ENCODE measurements at regions of chr2 and their contacts with region 1.

Region 1: GRCh38 chr2:10302479-10303180 is at the start of gene HPCAL1:
- DNase-seq: no peak
- ATAC-seq: peak; percentile 87
- H3K4me3 ChIP-seq: peak within 1 kb of the TSS; percentile 88 to 94
- H3K27ac ChIP-seq: peak within 1 kb of the TSS; percentile 91
- H3K4me1 ChIP-seq: peaks cover 52% of the 10 kb centered on the region
- H3K27me3 ChIP-seq: no peaks in the 10 kb centered on the region
- CTCF ChIP-seq: peak; percentile 82
- total RNA-seq, gene HPCAL1: 234 TPM

Region 2: GRCh38 chr2:10316336-10316735 is 13.7 kb after region 1 on chr2:
- CTCF ChIA-PET with region 1: interaction called, 10 read pairs
- POLR2A ChIA-PET with region 1: no interaction called
- in situ Hi-C with region 1: no loop called
- intact Hi-C with region 1: no loop called
- DNase-seq: no peak
- ATAC-seq: peak; percentile 59
- H3K4me3 ChIP-seq: peak overlapping the region in 1 of 2 experiments; percentile 14; a peak in 2 of 4 replicates
- H3K27ac ChIP-seq: peak overlapping the region; percentile 80
- H3K4me1 ChIP-seq: peaks cover 47% of the 10 kb centered on the region
- H3K27me3 ChIP-seq: no peaks in the 10 kb centered on the region
- CTCF ChIP-seq: no peak